IMR-90 (cell line): ENCODE measurements at regions of chr19 and their contacts with region 1.

Region 1: DNA sequence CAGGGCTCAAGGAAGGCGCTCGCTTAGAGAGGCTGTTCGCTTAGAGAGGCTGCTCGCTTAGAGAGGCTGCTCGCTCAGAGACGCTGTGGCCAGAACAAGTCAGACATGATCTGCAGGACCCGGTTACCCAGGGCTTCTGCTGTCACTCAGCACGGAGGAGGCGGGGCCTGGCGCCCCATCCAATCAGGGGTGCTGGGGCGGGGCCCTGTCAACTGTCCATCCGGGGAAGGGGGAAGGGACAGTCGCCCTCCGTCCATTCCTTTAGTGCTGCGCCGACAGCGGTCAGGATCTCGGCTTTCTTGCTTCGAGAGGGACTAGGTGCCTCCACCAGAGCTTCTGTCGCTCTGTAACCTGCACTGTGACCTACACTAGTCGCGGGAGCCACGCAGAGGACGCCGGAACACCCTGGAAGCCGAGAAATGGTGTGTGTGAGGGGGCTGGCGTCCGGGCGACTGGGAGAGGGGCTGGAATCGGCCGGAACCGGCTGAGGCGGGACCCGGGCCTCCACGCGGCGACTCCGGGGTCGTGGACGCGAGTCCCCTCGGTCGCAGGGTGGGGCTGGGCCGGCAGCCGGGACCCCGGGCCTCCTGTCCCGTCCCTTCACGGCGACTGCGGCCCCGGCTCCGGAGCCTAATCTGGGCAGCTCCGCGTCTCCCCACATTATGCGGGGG is at the start of gene ZNF440:
- DNase-seq: peak; percentile 92
- ATAC-seq: peak; percentile 100
- H3K4me3 ChIP-seq: peak within 1 kb of the TSS; percentile 86
- H3K27ac ChIP-seq: peak within 1 kb of the TSS; percentile 89
- H3K4me1 ChIP-seq: no peaks in the 10 kb centered on the region
- H3K27me3 ChIP-seq: no peaks in the 10 kb centered on the region
- CTCF ChIP-seq: no peak
- POLR2A ChIP-seq: peak; percentile 67; the same call in 1 of the 2 replicates
- RAD21 ChIP-seq: 0 out of 2 replicates have a peak, but pooled peaks have one; percentile 5
- total RNA-seq, gene ZNF440: 8.4 and 9.4 TPM in 2 replicates

Region 2: GRCh38 chr19:11624069-11624463 is 190.1 kb before region 1 on chr19:
- CTCF ChIA-PET with region 1: no interaction called
- POLR2A ChIA-PET with region 1: no interaction called
- dilution Hi-C with region 1: no loop called
- in situ Hi-C with region 1: no loop called
- intact Hi-C with region 1: no loop called
- DNase-seq: peak; percentile 35
- ATAC-seq: peak; percentile 38
- H3K4me3 ChIP-seq: no peak overlapping the region
- H3K27ac ChIP-seq: no peak overlapping the region
- H3K4me1 ChIP-seq: no peaks in the 10 kb centered on the region; the same call in 1 of the 2 replicates
- H3K27me3 ChIP-seq: peaks cover 6% of the 10 kb centered on the region
- CTCF ChIP-seq: no peak
- POLR2A ChIP-seq: no peak
- RAD21 ChIP-seq: no peak

Region 3: DNA sequence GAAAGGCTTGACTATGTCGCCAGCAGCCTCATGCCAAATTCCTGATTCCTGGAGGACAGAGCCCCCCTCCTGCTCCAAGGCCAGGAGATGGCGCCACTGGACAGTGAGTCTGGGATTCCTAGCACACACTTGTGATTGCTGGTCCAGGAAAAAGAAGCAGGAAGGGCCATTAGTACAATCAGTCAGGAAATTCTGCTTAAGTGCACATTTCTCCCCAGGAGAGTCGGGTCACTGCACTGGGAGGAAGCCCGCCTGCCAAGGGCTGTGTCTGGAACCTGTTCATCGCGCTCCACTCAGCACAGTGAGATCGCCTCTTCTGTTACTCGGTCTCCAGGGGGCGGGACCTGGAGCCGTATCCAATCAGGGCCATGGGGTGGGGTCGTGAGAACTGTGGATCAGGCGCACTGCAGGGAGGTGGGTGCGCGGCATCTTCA is 140.5 kb before region 1 on chr19:
- CTCF ChIA-PET with region 1: no interaction called
- POLR2A ChIA-PET with region 1: no interaction called
- dilution Hi-C with region 1: no loop called
- in situ Hi-C with region 1: no loop called
- intact Hi-C with region 1: loop called (anchors 5 kb)
- DNase-seq: peak; percentile 55
- ATAC-seq: peak; percentile 98
- H3K4me3 ChIP-seq: peak overlapping the region; percentile 63
- H3K27ac ChIP-seq: no peak overlapping the region
- H3K4me1 ChIP-seq: no peaks in the 10 kb centered on the region
- H3K27me3 ChIP-seq: no peaks in the 10 kb centered on the region
- CTCF ChIP-seq: peak; percentile 68
- POLR2A ChIP-seq: no peak
- RAD21 ChIP-seq: peak; percentile 58

Region 4: DNA sequence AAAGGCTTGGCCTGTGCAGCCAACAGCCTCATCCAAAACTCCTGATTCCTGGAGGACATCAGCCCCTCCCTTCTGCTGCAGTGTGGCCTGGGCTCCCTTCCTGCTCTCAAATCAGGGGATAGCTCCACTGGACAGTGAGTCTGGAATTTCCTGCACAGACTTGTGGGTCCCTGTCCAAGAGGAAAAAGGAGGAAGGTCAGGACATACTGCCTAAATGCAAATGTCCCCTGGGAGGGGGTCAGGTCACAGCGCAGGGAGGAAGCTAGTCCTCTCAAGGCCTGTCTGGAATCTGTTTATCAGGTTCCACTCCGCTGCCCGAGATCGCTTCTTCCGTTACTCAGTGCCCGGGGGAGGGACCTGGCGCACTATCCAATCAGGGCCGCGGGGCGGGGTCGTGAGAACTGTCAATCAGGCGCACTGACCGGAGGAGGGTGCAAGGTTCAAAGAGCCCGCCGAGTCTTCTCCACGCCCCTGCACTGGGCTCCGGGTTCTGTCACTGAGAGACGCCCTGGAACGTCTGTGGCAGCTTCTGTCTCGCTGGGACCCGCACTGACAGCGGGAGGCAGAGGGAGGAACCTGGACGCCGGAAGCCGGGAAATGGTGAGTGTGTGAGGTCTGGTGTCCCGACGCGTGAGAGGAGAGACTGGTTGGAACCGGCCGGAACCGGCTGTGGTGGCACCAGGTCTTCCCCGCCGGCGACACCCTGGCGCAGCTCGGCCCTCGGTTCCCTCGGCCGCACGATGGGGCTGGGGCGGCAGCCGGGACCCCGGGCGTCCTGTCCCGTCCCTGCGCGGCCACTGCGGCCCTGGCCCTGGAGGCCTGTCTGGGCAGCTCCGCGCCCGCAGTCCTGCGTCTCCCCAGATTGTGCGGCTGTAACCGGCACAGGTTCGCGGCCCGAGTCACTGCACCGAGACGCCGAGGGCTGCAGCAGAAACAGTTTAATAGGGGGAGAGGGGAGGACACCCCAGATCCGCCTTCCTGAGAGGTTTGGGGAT is 47.3 kb before region 1 on chr19 and contains the start of gene ZNF441:
- CTCF ChIA-PET with region 1: no interaction called
- POLR2A ChIA-PET with region 1: no interaction called
- dilution Hi-C with region 1: no loop called
- in situ Hi-C with region 1: no loop called
- intact Hi-C with region 1: loop called (anchors 1 kb)
- DNase-seq: peak; percentile 89
- ATAC-seq: peak; percentile 98
- H3K4me3 ChIP-seq: peak within 1 kb of the TSS; percentile 78
- H3K27ac ChIP-seq: peak within 1 kb of the TSS; percentile 85
- H3K4me1 ChIP-seq: peaks cover 2% of the 10 kb centered on the region; the same call in 1 of the 2 replicates
- H3K27me3 ChIP-seq: no peaks in the 10 kb centered on the region
- CTCF ChIP-seq: no peak
- POLR2A ChIP-seq: peak; percentile 53
- RAD21 ChIP-seq: no peak
- total RNA-seq, gene ZNF441: 9.7 and 12.2 TPM in 2 replicates

Region 5: DNA sequence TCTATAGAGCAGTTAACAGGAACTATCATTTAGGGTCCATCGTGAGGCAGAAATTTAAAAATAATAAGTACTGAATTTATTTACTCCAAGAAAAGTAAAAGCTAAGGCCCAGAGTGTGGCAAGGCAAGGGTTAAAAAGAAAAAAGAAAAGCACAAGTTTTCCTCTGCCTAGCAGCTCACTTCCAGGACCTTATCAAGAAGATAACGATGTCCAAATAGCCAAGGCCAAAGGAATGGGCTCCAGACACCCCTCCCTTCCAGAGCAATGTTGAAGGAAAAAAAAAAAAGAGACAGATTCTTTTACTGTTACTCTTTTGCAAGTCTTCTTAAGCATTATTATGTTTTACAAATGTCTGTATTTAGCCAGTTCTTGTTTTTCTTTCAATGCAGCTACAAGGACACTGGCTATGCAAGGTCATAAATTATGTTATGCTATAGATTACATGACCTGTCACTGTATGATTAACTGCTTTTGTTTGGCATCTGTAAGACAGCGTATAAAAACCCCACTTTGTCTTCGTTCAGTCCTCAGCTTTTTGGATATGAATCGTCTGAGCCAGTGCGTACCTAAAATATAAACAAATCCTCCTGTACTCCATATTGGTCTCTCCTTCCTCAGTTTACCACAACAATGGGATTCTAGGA is 107.8 kb after region 1 on chr19:
- CTCF ChIA-PET with region 1: no interaction called
- POLR2A ChIA-PET with region 1: no interaction called
- dilution Hi-C with region 1: no loop called
- in situ Hi-C with region 1: no loop called
- intact Hi-C with region 1: no loop called
- DNase-seq: peak; percentile 5
- ATAC-seq: no peak
- H3K4me3 ChIP-seq: no peak overlapping the region
- H3K27ac ChIP-seq: no peak overlapping the region
- H3K4me1 ChIP-seq: peaks cover 4% of the 10 kb centered on the region; the same call in 1 of the 2 replicates
- H3K27me3 ChIP-seq: no peaks in the 10 kb centered on the region
- CTCF ChIP-seq: no peak
- POLR2A ChIP-seq: no peak
- RAD21 ChIP-seq: no peak